Posterior vena cava (tissue), 2 donors: ENCODE measurements at regions of chr2 and their contacts with region 1.

Region 1: DNA sequence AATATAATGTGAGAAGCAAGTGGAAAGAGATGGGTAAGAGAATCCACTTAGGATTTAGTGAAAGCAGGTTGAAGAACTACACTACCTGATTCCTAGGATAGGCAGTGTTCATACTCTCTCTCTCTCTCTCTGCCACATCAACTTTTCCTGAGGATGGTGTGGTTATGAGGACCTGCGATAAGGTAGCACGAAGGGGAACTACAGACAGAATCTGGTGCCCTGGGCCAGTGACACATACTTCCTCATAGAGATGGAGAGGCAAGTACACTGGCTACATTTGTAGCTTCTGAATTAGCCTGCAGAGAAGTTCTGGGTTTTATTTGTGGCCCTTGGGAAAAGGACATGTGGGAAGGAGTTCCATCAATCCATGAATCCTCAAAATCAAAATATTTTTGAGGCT is 44.5 kb downstream of the PTH2R start:
- DNase-seq: no peak

Region 2: DNA sequence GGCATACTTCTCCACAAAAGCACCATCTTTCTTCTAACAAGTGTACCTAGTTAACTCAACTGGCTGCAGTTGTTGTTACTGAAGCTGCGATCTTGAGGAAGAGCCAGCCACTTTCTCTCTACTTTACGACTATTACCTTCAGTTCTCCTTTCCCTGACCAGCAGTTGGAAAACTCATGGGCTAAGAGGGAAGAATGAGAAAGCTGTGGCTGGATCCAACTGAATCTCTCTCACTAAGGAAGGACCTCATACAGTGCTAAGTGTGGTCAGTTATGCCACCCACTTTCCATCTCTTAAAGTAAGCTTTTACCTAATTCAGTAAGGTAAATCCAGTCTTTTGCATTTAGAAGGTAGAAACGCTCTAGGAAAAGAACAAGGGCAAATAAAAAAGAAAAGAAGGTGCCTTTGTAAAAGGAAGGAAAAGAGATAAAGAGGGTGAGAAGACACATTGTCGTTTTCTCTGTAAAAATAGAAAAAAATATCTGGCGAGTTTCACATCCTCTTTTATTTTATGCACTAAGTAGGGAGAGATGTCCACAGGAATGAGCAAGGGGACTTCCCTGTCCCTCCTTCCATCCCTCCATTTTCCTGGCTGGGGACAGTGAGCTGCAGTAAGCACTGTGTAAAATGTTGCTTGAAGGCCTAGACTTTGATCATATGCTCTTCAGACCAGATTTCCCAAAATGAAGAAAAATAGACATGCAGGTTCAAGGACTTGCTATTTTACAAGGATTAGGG is 499.2 kb before region 1 on chr2:
- intact Hi-C with region 1: no loop called
- DNase-seq: no peak

Region 3: DNA sequence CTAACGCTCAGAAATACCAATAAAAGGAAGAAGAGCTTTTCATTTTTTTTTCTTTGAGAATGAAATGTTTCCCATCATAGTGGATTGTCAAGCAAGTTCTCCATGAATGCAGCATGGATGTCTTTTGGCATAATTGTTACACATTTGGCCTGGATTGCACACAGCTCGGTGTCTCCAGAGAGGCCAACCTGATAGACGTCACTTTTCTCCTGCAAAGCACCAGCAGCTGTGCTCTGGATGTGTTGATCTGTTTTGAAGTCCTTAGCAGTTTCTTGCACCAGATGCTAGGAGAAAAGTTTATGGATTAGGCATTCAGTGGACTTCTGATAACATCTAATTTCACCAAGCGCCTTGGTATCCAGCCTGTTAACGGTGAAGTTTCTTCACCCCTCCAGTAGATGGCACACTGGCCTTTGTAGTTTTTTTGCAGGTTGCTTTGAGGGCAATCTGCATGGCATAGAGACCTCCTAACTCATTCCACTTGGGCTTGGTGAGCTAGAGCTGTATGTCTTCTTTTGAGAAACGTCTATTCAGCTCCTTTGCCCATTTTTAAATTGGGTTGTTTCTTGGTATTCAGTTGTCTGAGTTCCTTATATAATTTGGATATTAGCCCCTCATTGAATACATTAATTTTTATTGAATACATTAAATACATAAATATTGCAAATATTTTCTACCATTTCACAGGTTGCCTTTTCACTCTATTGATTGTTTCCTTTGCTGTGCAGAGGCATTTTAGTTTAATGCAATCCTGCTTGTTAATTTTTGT is 15.3 kb after region 1 on chr2:
- intact Hi-C with region 1: no loop called
- DNase-seq: no peak

Region 4: DNA sequence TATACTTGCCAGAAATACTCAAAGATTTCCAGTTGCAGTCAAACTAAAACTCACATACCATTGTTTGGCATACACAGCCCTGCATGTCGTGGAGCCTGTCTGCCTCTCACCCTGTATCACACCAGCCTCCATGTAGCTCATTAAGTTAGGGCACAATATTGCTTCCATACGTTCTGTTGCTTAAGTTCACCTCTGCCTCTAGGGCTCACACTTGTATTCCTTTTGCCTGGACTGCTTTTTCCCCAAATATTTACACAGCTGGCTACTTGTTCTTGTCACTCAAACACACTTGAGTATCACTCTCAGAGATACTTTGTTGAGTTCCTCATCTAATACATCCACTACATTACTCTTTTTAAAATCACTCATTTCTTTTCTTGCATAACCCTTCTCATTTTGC is 38.6 kb after region 1 on chr2:
- intact Hi-C with region 1: no loop called
- DNase-seq: no peak

Region 5: GRCh38 chr2:208515099-208515498 is 64.0 kb after region 1 on chr2:
- intact Hi-C with region 1: loop called in 1 of 2 experiments (anchors 2 kb)
- DNase-seq: no peak